ENCODE measurements at regions of chr13 and their contacts with region 1.

Region 1: DNA sequence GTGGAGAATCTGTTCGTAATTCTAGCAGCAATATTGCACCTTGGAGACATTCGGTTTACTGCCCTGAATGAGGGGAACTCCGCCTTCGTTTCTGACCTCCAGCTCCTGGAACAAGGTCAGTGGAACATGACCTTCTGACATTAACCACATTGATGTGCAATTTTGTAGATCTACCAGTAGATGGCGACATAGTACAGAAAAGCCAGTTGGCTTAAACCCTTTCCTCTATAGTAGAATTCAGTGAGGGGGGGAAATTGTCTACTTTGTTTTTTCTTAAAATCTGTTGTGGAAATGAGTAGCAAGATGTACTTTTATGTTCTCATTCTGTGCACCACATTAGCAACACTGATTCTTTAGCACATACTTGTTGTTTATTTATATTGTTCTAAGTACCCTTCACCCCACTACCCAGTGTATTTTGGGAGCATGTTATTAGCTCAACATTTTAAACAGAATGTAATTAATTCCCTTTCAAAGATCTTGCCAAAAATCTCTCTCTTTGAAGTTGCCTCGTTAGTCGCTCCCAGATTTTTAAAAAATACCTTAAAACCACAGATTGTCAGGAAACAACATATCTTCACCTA is 332.2 kb downstream of the MYO16 start:
- DNase-seq: peak in 1 of 2 experiments; percentile 48
- H3K4me3 ChIP-seq: no peak overlapping the region
- H3K4me3 Mint-ChIP-seq: no peak overlapping the region
- H3K27ac Mint-ChIP-seq: no peak overlapping the region
- H3K4me1 ChIP-seq: no peaks in the 10 kb centered on the region
- H3K4me1 Mint-ChIP-seq: peaks cover 15% of the 10 kb centered on the region
- H3K27me3 ChIP-seq: no peaks in the 10 kb centered on the region
- H3K27me3 Mint-ChIP-seq: no peaks in the 10 kb centered on the region
- CTCF ChIP-seq: peak; percentile 78 to 87

Region 2: DNA sequence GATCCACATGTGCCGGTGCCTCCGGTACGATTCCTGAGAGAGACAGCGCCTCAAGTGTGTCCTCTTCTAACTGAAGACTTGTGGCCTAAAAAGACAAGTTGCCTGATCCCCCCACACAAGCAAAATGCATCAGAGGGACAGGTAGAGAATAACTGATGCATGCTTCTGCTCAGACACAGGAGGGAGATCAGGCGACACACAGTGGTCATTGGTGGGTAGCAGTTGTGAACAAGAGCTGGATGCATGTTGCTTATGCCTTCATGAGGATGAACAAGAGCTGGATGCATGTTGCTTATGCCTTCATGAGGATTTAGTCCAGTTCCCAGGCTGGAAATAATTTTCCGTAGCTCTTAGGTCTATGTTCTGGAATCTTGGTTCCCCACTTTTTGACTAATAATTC is 173.4 kb after region 1 on chr13:
- CTCF ChIA-PET with region 1: interaction called, 18 read pairs
- POLR2A ChIA-PET with region 1: no interaction called
- intact Hi-C with region 1: loop called (anchors 1 kb)
- DNase-seq: peak in 1 of 2 experiments; percentile 26
- H3K4me3 ChIP-seq: no peak overlapping the region
- H3K4me3 Mint-ChIP-seq: no peak overlapping the region
- H3K27ac Mint-ChIP-seq: no peak overlapping the region
- H3K4me1 ChIP-seq: peaks cover 6% of the 10 kb centered on the region; the same call in 1 of the 2 replicates
- H3K4me1 Mint-ChIP-seq: peaks cover 3% of the 10 kb centered on the region
- H3K27me3 ChIP-seq: no peaks in the 10 kb centered on the region
- H3K27me3 Mint-ChIP-seq: no peaks in the 10 kb centered on the region
- CTCF ChIP-seq: peak; percentile 27 to 55

Region 3: DNA sequence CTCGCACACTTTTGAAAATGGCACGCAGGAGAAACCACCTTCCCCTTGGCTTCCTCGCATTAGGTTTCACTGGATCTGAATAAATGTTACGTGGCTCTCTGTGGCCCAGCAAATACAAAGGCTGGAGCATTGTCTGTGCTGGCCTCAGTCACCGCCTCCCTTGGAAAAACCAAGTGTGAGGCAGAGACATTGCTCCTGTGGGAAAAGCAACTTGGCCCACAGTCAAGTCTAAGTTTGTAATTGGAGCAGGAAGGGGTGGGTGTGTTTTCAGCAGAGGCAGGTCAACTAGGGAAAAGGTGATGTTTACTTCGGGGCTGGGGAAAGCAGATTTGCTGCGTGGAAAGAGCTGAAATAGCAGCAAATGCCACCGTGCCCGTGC is 723.2 kb after region 1 on chr13:
- CTCF ChIA-PET with region 1: no interaction called
- POLR2A ChIA-PET with region 1: no interaction called
- intact Hi-C with region 1: loop called (anchors 1 kb)
- DNase-seq: no peak
- H3K4me3 ChIP-seq: no peak overlapping the region
- H3K4me3 Mint-ChIP-seq: no peak overlapping the region
- H3K27ac Mint-ChIP-seq: no peak overlapping the region
- H3K4me1 ChIP-seq: no peaks in the 10 kb centered on the region
- H3K4me1 Mint-ChIP-seq: peaks cover 6% of the 10 kb centered on the region
- H3K27me3 ChIP-seq: no peaks in the 10 kb centered on the region
- H3K27me3 Mint-ChIP-seq: peaks cover 7% of the 10 kb centered on the region
- CTCF ChIP-seq: no peak

Region 4: GRCh38 chr13:109747524-109747923 is 785.9 kb after region 1 on chr13:
- CTCF ChIA-PET with region 1: interaction called, 4 read pairs
- POLR2A ChIA-PET with region 1: no interaction called
- intact Hi-C with region 1: loop called (anchors 1 kb)
- DNase-seq: peak in 1 of 2 experiments; percentile 25
- H3K4me3 ChIP-seq: no peak overlapping the region
- H3K4me3 Mint-ChIP-seq: no peak overlapping the region
- H3K27ac Mint-ChIP-seq: no peak overlapping the region
- H3K4me1 ChIP-seq: peaks cover 4% of the 10 kb centered on the region; the same call in 1 of the 2 replicates
- H3K4me1 Mint-ChIP-seq: peaks cover 5% of the 10 kb centered on the region
- H3K27me3 ChIP-seq: no peaks in the 10 kb centered on the region
- H3K27me3 Mint-ChIP-seq: peaks cover 2% of the 10 kb centered on the region
- CTCF ChIP-seq: peak; percentile 12 to 41